PC-3 (cell line): ENCODE measurements at regions of chr14 and their contacts with region 1.

Region 1: DNA sequence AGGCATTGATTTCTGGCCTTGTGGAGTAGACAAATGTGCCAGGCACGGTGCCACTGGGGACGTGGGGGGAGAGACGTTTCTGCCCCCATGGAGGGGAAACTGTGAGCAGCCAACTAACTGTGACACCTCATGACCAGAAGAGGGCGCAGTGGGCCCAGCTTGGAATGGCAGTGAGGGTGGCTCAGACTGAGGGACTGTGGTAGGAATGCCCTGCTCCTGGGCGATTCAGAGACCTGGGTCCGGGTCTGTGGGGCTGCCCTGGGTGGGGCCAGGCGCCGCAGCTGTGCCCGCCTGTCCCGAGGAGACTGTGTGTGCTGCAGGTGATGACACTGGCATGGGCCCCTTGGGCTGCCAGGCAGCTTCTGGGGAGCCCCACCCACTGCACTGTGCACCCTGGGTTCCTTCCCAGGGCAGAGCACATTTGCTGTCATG is 60.6 kb downstream of the SLC25A47 start:
- DNase-seq: peak; percentile 76
- ATAC-seq: peak; percentile 61
- H3K4me3 ChIP-seq: no peak overlapping the region
- H3K27ac ChIP-seq: no peak overlapping the region; the same call in 1 of the 2 replicates
- H3K4me1 ChIP-seq: peaks cover 33% of the 10 kb centered on the region
- H3K27me3 ChIP-seq: no peaks in the 10 kb centered on the region
- CTCF ChIP-seq: peak; percentile 90

Region 2: GRCh38 chr14:100645192-100645990 is 261.6 kb after region 1 on chr14:
- CTCF ChIA-PET with region 1: interaction called, 49 read pairs
- POLR2A ChIA-PET with region 1: interaction called, 7 read pairs
- intact Hi-C with region 1: loop called (anchors 1 kb)
- DNase-seq: peak; percentile 90
- ATAC-seq: peak; percentile 88
- H3K4me3 ChIP-seq: no peak overlapping the region
- H3K27ac ChIP-seq: no peak overlapping the region
- H3K4me1 ChIP-seq: peaks cover 16% of the 10 kb centered on the region
- H3K27me3 ChIP-seq: no peaks in the 10 kb centered on the region
- CTCF ChIP-seq: peak; percentile 87

Region 3: DNA sequence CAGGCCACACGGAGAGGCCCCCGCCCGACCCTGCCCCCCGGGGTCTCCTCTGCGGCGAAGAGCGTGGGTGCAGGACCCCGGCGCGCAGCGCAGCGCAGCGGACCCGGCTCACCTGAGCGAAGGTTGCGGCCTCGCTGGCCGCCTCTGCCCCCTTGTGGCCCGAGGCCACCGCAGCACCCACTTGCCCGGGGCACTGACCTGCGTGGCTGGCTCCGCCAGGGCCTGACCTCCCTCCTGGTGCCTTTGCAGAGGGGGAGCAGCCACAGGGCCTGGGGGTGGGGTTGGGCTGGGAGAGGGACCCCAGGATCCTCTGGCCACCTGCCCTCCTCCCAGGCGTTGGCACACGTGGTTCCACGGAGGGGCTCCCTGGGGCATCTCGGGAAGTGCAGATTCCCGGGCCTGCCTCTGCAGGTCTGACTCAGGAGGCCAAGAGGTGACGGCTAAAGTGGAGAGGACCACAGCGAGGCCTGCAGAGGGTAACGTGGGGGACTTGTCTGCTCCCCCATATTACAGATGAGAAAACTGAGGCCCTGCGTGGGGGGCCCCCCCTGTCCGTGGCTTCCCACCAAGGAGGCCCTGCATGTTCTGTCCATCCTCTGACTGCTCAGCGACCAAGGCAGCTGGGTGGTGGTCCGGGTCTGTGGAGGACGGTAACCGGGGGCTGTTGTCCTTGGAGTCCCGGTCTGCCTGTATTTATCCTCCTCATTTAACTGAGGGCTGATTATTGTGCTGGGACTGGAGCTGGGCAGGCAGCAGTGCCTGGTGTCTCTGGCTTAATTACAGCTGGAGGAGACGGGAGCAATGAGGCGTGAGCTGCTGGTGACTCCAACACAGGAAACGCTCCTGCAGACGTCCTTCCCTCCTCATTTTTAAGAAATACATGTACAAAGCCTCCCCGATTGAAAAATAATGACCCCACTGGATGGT is 271.3 kb after region 1 on chr14:
- CTCF ChIA-PET with region 1: interaction called, 9 read pairs
- POLR2A ChIA-PET with region 1: no interaction called
- intact Hi-C with region 1: loop called (anchors 2 kb)
- DNase-seq: peak; percentile 56
- ATAC-seq: peak; percentile 87
- H3K4me3 ChIP-seq: peak overlapping the region; percentile 66
- H3K27ac ChIP-seq: no peak overlapping the region
- H3K4me1 ChIP-seq: peaks cover 11% of the 10 kb centered on the region
- H3K27me3 ChIP-seq: no peaks in the 10 kb centered on the region
- CTCF ChIP-seq: peak; percentile 76